Activated B cell treated with CpG ODN at 0.5 μM for 24 hours (primary cell): ENCODE measurements at regions of chr20 and their contacts with region 1.

Region 1: DNA sequence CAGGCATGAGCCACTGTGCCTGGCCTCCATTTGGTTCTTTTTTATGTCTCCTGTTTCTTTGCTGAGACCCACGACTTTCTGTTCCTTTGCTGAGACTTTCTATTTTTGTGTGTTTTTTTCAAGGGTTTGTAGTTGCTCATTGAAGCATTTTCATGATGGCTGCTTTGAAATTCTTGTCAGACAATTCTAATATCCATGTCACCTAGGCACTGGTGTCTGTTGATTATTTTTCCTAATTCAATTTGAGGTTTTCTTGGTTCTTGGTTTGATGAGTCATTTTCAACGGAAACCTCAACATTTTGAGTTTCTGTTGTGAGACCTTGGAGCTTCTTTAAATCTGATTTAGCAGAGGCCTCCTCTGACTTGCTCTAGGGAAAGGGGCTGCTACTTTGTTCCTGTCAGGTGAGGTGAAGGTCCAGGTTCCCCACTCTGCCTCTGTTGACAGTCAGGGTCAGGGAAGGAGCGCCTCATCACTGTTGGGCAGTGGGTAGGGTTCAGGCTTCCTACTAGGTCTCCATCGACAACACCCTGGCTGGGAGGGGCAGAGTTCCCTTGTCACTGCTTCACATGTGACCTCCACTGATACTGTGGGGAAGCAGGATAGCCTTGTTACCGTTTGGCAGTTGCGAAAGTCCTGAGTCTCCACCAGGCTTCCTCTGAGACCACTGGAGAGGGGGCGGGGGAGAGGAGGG is 67.2 kb upstream of the RNF24 start:
- DNase-seq: peak; percentile 26
- ATAC-seq: peak; percentile 62
- H3K4me3 Mint-ChIP-seq: peak overlapping the region; percentile 39
- H3K27ac Mint-ChIP-seq: peak overlapping the region; percentile 81
- H3K4me1 Mint-ChIP-seq: peaks cover 34% of the 10 kb centered on the region
- H3K27me3 Mint-ChIP-seq: peaks cover 4% of the 10 kb centered on the region
- CTCF ChIP-seq: no peak

Region 2: GRCh38 chr20:3121271-3121911 is 961.2 kb before region 1 on chr20:
- CTCF ChIA-PET with region 1: no interaction called
- POLR2A ChIA-PET with region 1: no interaction called
- intact Hi-C with region 1: no loop called
- DNase-seq: no peak
- ATAC-seq: no peak
- H3K4me3 Mint-ChIP-seq: no peak overlapping the region
- H3K27ac Mint-ChIP-seq: no peak overlapping the region
- H3K4me1 Mint-ChIP-seq: peaks cover 6% of the 10 kb centered on the region
- H3K27me3 Mint-ChIP-seq: no peaks in the 10 kb centered on the region
- CTCF ChIP-seq: no peak

Region 3: DNA sequence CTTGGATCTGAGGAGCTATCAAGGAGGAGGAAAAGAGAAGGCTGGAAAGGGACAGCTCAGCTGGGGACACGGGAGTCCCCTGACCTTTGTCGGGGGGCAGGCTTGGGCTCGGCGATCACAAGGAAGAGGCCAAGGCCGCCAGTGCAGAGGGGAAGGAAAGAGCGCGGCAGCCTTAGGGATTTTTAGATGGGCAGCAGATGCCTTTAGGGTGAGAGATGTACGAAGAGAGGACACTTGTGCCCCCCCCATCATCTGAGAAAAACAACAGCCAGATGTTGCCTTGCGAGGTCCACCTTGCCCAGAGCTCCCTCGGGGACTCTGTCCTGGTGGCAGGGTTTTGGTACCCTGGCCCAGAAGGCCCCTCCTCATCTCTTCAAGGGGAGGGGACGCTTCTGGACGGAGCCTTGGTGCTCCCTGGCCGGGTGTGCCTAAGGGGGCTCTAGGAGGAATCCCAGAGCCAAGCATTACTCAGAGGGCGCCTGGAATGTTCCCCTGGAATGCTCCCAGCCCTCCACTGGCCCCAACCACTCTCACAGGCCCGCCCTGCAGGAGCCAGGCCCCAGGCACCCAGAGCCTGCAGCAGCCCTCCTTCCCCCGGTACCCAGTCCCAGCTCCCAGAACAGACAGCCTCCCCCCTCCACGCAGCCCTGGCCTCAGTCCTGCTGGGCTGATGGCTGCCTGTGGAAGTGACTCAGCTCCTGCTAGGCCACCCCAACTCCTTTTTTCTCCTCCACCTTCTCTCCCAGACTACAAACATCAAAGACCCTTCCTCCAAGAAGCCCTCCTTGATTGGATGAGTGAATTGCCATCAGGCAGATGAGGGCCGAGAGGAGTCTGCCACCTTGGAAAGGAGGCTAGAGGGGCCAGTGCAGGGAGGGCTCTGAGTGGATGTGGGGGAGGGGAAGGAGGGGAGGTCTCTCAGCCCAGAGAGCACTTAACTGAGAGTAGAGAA is 402.5 kb before region 1 on chr20:
- CTCF ChIA-PET with region 1: interaction called, 19 read pairs
- POLR2A ChIA-PET with region 1: no interaction called
- intact Hi-C with region 1: loop called (anchors 1 kb)
- DNase-seq: no peak
- ATAC-seq: no peak
- H3K4me3 Mint-ChIP-seq: no peak overlapping the region
- H3K27ac Mint-ChIP-seq: no peak overlapping the region
- H3K4me1 Mint-ChIP-seq: peaks cover 7% of the 10 kb centered on the region
- H3K27me3 Mint-ChIP-seq: peaks cover 40% of the 10 kb centered on the region
- CTCF ChIP-seq: no peak

Region 4: GRCh38 chr20:3786665-3787323 is 295.8 kb before region 1 on chr20 and contains the start of gene CENPB:
- CTCF ChIA-PET with region 1: interaction called, 6 read pairs
- POLR2A ChIA-PET with region 1: interaction called, 4 read pairs
- intact Hi-C with region 1: loop called (anchors 1 kb)
- DNase-seq: peak; percentile 96
- ATAC-seq: peak; percentile 95
- H3K4me3 Mint-ChIP-seq: peak within 1 kb of the TSS; percentile 82
- H3K27ac Mint-ChIP-seq: peak within 1 kb of the TSS; percentile 70
- H3K4me1 Mint-ChIP-seq: peaks cover 24% of the 10 kb centered on the region
- H3K27me3 Mint-ChIP-seq: no peaks in the 10 kb centered on the region
- CTCF ChIP-seq: no peak
- total RNA-seq, gene CENPB: 50.1 and 51.7 TPM in 2 replicates

Region 5: GRCh38 chr20:3888622-3889488 is 193.7 kb before region 1 on chr20 and contains the start of gene PANK2:
- CTCF ChIA-PET with region 1: interaction called, 6 read pairs
- POLR2A ChIA-PET with region 1: interaction called, 9 read pairs
- intact Hi-C with region 1: loop called (anchors 1 kb)
- DNase-seq: peak; percentile 92
- ATAC-seq: peak; percentile 96
- H3K4me3 Mint-ChIP-seq: peak within 1 kb of the TSS; percentile 97
- H3K27ac Mint-ChIP-seq: peak within 1 kb of the TSS; percentile 92
- H3K4me1 Mint-ChIP-seq: peaks cover 53% of the 10 kb centered on the region
- H3K27me3 Mint-ChIP-seq: no peaks in the 10 kb centered on the region
- CTCF ChIP-seq: no peak
- total RNA-seq, gene PANK2: 52.1 and 55.0 TPM in 2 replicates

Region 6: DNA sequence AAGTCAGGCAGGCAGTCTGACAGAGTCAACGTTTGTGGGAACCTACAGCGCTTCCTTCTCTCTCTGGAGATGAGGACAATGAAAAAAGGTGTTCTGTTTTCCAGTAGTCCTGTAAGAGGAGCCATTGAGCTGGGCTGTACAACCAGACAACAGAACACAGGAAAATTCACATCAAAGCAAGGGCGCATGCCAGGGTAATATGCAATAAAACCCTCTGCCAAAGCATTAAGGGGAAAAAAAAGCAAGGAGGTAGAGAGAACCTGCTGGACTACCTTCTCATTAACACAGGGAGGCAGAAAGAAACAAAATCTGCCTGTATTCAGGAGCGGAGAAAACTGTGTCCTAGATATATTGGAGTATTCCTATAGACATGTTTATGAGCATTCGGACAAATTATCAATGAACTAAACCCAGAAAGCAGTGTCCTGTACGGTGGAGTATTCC is 68.5 kb before region 1 on chr20:
- CTCF ChIA-PET with region 1: interaction called, 8 read pairs
- POLR2A ChIA-PET with region 1: interaction called, 9 read pairs
- intact Hi-C with region 1: loop called (anchors 1 kb)
- DNase-seq: no peak
- ATAC-seq: no peak
- H3K4me3 Mint-ChIP-seq: peak overlapping the region; percentile 83
- H3K27ac Mint-ChIP-seq: no peak overlapping the region
- H3K4me1 Mint-ChIP-seq: peaks cover 33% of the 10 kb centered on the region
- H3K27me3 Mint-ChIP-seq: peaks cover 2% of the 10 kb centered on the region
- CTCF ChIP-seq: no peak

Region 7: GRCh38 chr20:4047614-4048013 is 34.9 kb before region 1 on chr20:
- CTCF ChIA-PET with region 1: no interaction called
- POLR2A ChIA-PET with region 1: no interaction called
- intact Hi-C with region 1: no loop called
- DNase-seq: no peak
- ATAC-seq: no peak
- H3K4me3 Mint-ChIP-seq: no peak overlapping the region
- H3K27ac Mint-ChIP-seq: no peak overlapping the region
- H3K4me1 Mint-ChIP-seq: no peaks in the 10 kb centered on the region
- H3K27me3 Mint-ChIP-seq: peaks cover 10% of the 10 kb centered on the region
- CTCF ChIP-seq: no peak

Region 8: DNA sequence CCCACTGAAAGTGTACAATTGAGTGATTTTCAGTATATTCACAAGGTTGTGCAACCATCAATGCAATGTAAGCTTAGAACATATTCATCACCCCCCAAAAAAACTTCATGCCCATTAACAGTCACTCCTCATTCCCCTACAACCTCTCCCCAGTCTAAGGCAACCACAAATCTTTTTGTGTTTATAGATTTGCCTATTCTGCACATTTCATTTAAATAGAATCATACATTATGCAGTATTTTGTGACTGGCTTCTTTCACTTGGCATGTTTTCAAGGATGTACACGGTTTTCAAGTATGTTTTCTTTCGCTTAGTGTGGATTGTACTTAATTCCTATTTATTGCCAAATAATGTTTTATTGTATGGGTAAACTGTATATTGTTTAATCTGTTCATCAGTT is 262.1 kb after region 1 on chr20:
- CTCF ChIA-PET with region 1: no interaction called
- POLR2A ChIA-PET with region 1: no interaction called
- intact Hi-C with region 1: no loop called
- DNase-seq: no peak
- ATAC-seq: no peak
- H3K4me3 Mint-ChIP-seq: no peak overlapping the region
- H3K27ac Mint-ChIP-seq: no peak overlapping the region
- H3K4me1 Mint-ChIP-seq: no peaks in the 10 kb centered on the region
- H3K27me3 Mint-ChIP-seq: peaks cover 7% of the 10 kb centered on the region
- CTCF ChIP-seq: no peak

Region 9: DNA sequence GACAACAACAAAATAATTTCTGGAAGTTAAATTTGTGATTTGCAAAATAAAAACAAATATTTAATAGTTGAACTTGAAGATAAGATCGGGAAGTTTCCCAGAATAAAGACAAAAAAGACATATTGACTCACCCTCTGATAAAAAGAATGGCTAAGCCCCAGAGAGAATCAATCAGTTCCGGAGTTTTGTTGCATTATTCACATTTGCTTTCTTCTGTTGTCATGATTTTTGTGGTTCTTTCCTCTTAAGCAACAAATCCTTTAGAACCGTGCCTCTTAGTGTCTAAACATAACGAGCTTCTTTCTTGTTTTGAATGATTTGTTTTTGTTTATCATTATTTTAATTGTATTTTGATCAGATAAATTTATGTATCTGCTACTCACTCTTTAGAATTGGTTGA is 301.4 kb after region 1 on chr20:
- CTCF ChIA-PET with region 1: no interaction called
- POLR2A ChIA-PET with region 1: no interaction called
- intact Hi-C with region 1: no loop called
- DNase-seq: no peak
- ATAC-seq: no peak
- H3K4me3 Mint-ChIP-seq: no peak overlapping the region
- H3K27ac Mint-ChIP-seq: no peak overlapping the region
- H3K4me1 Mint-ChIP-seq: no peaks in the 10 kb centered on the region
- H3K27me3 Mint-ChIP-seq: peaks cover 14% of the 10 kb centered on the region
- CTCF ChIP-seq: no peak